Heart right ventricle (tissue), 16 donors: ENCODE measurements at regions of chr19 and their contacts with region 1.

Region 1: DNA sequence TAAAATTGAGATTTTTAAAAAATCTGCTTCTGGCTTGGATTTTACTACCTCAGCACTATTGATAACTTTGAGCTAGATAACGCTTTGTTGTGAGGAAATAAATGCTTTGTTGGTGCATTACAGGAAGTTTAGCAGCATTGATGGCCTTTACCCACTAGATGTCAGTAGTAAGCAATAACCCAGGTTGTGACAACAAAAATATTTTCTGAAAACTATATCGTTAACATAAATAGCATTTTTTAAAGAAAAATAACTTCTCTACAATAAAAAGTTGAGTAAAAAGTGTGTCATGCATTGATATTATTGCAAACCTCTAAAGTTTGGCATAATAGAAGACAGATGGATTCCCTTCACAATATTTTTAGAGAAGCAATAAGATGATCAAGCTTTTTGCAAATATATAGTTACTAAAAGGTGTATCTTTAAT is 1246.5 kb downstream of the UQCRFS1 start:
- DNase-seq: no peak
- ATAC-seq: no peak
- H3K4me3 ChIP-seq: no peak overlapping the region
- H3K27ac ChIP-seq: no peak overlapping the region
- H3K4me1 ChIP-seq: peaks cover 0 to 12% (median 0%) of the 10 kb centered on the region in 9 donors
- H3K27me3 ChIP-seq: peaks cover 0 to 4% (median 0%) of the 10 kb centered on the region in 7 donors
- CTCF ChIP-seq: peak; percentile 24 to 74 (median 64)

Region 2: DNA sequence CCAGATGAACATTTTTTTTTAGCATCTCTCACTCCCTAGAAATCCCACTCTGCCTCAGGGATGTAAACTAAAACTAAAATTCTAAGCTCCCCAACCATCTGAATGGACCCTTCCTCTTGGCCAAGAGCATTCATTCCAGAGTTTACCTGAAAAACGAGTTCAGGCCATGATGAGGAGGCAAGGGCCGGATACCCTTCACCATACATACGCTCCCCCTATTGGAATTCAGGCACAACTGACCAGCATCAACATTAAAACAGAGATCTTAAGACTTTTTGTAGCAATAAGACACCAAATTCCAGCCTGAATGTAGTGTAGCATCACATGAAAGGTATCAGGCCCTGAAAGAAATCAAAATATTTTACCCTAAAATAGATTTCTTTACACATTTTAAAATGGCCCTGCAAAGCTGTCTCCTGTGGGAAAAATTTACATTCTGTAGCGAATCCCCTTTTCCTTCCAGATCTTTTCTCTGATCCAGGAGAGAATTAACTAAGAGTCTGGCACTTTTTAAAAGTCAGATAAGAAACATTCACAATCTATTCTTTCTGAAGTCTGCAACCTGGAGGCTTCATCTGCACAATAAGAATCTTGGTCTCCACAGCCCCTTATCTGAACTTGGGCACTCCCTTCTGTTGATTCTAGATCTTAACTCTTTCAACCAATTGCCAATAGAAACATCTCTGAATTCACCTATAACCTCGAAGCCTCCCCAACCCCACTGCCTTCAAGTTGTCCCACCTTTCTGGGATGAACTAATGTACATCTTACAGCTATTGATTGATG is 358.1 kb after region 1 on chr19:
- intact Hi-C with region 1: loop called in 6 of 10 experiments (anchors 2 to 5 kb)
- DNase-seq: no peak
- ATAC-seq: no peak
- H3K4me3 ChIP-seq: no peak overlapping the region
- H3K27ac ChIP-seq: no peak overlapping the region
- H3K4me1 ChIP-seq: no peaks in the 10 kb centered on the region
- H3K27me3 ChIP-seq: peaks cover 0 to 11% (median 4%) of the 10 kb centered on the region in 7 donors
- CTCF ChIP-seq: no peak

Region 3: DNA sequence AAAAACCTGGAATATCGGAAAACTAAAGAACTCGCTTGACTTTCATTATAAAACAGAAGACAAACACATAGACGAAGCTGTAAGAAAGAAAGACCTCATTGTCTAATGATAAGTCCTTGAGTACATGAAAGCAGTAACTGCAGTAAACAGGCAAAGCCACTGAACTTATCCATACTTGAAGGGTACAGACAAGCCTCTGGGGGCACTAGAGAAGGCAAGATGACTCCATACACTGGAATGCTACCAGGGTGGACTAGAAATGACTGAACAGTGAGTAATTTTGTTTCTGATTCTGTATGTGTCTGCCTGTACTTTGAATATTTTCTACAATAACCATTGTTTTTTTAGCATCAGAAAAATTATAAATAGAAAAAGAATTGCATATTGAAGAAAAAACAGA is 738.6 kb after region 1 on chr19:
- intact Hi-C with region 1: loop called in 6 of 10 experiments (anchors 5 to 10 kb)
- DNase-seq: no peak
- ATAC-seq: no peak
- H3K4me3 ChIP-seq: no peak overlapping the region
- H3K27ac ChIP-seq: no peak overlapping the region
- H3K4me1 ChIP-seq: no peaks in the 10 kb centered on the region
- H3K27me3 ChIP-seq: peaks cover 0 to 3% (median 0%) of the 10 kb centered on the region in 7 donors
- CTCF ChIP-seq: no peak

Region 4: GRCh38 chr19:28710278-28710677 is 743.9 kb after region 1 on chr19:
- intact Hi-C with region 1: loop called in 6 of 10 experiments (anchors 5 to 10 kb)
- DNase-seq: no peak
- ATAC-seq: no peak
- H3K4me3 ChIP-seq: no peak overlapping the region
- H3K27ac ChIP-seq: no peak overlapping the region
- H3K4me1 ChIP-seq: no peaks in the 10 kb centered on the region
- H3K27me3 ChIP-seq: peaks cover 0 to 8% (median 0%) of the 10 kb centered on the region in 7 donors
- CTCF ChIP-seq: peak; percentile 34 to 79 (median 71)